ENCODE measurements at regions of chr6 and their contacts with region 1.

Region 1: GRCh38 chr6:28758046-28758817 is 165.6 kb downstream of the TRIM27 start:
- DNase-seq: peak; percentile 86
- H3K4me3 Mint-ChIP-seq: peak overlapping the region; percentile 85
- H3K27ac Mint-ChIP-seq: peak overlapping the region; percentile 68
- H3K4me1 Mint-ChIP-seq: peaks cover 24% of the 10 kb centered on the region
- H3K27me3 Mint-ChIP-seq: no peaks in the 10 kb centered on the region
- CTCF ChIP-seq: no peak

Region 2: GRCh38 chr6:28802417-28803336 is 44.4 kb after region 1 on chr6:
- CTCF ChIA-PET with region 1: no interaction called
- POLR2A ChIA-PET with region 1: no interaction called
- intact Hi-C with region 1: loop called (anchors 5 kb)
- DNase-seq: peak; percentile 62
- H3K4me3 Mint-ChIP-seq: peak overlapping the region; percentile 86
- H3K27ac Mint-ChIP-seq: no peak overlapping the region
- H3K4me1 Mint-ChIP-seq: peaks cover 22% of the 10 kb centered on the region
- H3K27me3 Mint-ChIP-seq: no peaks in the 10 kb centered on the region
- CTCF ChIP-seq: no peak

Measured in MCF 10A (cell line).